ENCODE measurements at regions of chr2 and their contacts with region 1.

Region 1: GRCh38 chr2:38602732-38603401 is at the start of gene HNRNPLL:
- DNase-seq: peak; percentile 98 to 100 (median 99)
- H3K4me3 ChIP-seq: peak within 1 kb of the TSS; percentile 71 to 99 (median 92)
- H3K27ac ChIP-seq: peak within 1 kb of the TSS; percentile 91 to 99 (median 97)
- H3K4me1 ChIP-seq: peaks cover 21 to 40% of the 10 kb centered on the region in 2 donors
- H3K27me3 ChIP-seq: no peaks in the 10 kb centered on the region
- CTCF ChIP-seq: no peak
- POLR2A ChIP-seq: peak; percentile 94 to 99
- total RNA-seq, gene HNRNPLL: 24.5 to 75.2 (median 61.4) TPM

Region 2: DNA sequence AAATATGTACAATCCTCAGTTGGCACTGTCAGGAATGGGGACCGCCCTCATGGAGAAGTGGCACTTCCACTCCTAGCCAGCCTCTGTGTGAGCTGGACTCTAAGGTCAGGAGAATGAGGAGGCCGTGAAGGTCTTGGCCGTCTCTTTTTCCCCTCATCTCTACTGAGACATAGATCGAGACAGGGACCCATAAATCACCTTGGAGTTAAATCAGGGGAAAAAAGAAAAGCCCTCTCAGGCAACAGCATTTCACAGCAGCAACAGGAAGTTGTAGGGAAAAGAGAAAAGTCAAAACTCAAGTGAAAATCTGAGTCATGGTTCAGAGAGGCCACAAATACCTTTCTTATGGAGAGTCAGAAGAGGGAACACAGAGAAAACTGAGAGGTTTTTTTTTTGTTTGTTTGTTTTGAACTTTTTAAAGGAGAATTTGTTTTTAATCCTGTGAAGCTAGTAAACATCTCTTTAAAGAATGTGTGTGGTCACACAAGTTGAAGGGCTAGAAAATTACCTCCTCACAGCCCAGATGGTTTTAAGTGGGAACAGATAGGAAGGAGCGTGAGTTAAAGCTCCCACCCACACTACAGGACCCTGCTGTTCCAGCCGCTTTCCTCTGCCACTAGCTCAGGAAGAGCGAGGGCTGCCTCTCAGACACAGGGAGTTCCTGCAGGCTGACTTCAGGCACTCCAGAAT is 496.3 kb before region 1 on chr2:
- intact Hi-C with region 1: no loop called
- DNase-seq: no peak
- H3K4me3 ChIP-seq: no peak overlapping the region
- H3K27ac ChIP-seq: peak overlapping the region in 4 of 5 donors; percentile 48 to 87 (median 62)
- H3K4me1 ChIP-seq: peaks cover 13 to 16% of the 10 kb centered on the region in 2 donors
- H3K27me3 ChIP-seq: no peaks in the 10 kb centered on the region
- CTCF ChIP-seq: no peak
- POLR2A ChIP-seq: no peak

Region 3: DNA sequence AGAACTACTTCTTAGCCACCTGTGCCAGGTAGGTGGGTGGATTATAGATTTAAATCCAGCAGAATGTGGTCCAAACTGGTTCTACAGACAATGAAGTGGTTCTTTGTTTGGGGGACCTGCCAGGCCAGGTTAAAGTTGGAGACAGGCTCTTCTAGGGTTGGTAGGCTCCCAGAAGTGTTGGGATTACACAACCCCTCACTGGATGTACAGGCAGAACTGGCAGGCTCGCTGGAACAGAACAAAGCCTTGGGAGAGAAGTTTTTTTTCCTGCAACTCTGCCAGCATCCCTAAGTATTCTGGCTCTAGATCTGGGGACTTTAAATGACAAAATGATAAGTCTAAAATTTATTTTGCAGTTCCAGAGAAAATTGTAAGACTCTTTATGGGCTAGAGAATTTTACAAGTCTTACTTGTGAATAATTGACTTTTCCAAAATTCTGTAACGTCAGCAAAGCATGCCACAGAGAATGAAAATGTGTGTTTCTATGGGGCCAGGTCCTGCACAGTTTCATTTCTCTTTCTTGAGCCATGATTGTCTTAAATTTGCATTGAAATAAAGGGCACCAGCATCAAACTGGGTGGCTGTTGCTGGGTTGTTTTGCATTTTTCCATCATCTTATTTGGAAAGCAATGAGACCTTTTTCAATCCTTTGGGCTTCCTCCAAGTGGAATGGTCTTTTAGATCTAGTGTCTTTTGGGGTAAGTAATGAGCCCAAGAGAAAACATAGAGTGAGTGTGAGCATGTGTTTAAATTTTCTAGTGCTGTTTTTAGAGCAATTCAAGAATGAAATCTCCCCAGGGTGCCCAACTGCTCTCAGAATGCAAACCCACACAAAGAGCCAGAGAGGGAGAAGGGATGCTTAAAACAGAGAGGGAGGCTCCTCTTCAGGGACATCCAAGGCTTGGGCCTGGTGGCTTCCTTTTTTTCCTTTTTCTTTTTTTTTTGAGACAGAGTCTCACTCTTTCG is 193.4 kb before region 1 on chr2:
- intact Hi-C with region 1: no loop called
- DNase-seq: peak; percentile 47 to 82 (median 71)
- H3K4me3 ChIP-seq: no peak overlapping the region
- H3K27ac ChIP-seq: peak overlapping the region in 4 of 5 donors; percentile 4 to 67 (median 45)
- H3K4me1 ChIP-seq: peaks cover 22 to 41% of the 10 kb centered on the region in 2 donors
- H3K27me3 ChIP-seq: no peaks in the 10 kb centered on the region
- CTCF ChIP-seq: no peak
- POLR2A ChIP-seq: no peak

Region 4: DNA sequence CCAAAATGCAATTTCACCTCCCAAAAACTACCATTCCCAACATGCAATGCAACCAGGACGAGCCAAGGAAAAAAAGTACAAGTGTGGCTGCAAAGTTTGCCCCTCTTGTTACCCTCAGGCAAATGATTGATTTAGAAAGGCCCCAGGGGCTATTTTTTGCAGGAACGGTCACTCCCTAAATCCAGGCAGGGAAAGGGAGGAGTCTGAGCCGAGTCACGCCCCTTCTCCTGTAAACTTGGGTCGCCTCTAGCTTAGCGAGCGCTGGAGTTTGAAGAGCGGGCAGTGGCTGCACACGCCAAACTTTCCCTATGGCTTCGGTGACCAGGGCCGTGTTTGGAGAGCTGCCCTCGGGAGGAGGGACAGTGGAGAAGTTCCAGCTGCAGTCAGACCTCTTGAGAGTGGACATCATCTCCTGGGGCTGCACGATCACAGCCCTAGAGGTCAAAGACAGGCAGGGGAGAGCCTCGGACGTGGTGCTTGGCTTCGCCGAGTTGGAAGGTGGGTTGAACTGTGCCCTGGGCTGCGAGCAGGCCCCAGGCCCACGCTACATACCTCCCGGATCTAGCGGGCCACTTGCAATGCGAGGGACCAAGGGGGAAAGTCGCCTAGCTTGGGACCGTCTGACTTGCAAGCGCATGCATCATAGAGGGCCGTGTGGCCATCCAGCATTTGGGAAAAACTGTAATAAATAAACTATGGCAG is 63.1 kb after region 1 on chr2 and contains the start of gene GALM:
- intact Hi-C with region 1: loop called (anchors 2 to 10 kb)
- DNase-seq: peak; percentile 88 to 97 (median 94)
- H3K4me3 ChIP-seq: peak within 1 kb of the TSS; percentile 18 to 72 (median 64)
- H3K27ac ChIP-seq: peak within 1 kb of the TSS; percentile 43 to 87 (median 80)
- H3K4me1 ChIP-seq: peaks cover 23 to 24% of the 10 kb centered on the region in 2 donors
- H3K27me3 ChIP-seq: no peaks in the 10 kb centered on the region
- CTCF ChIP-seq: peak in 1 of 6 experiments; percentile 2
- POLR2A ChIP-seq: peak; percentile 70 to 98
- total RNA-seq, gene GALM: 40.0 to 351 (median 176) TPM

Region 5: GRCh38 chr2:38672445-38673391 is 69.9 kb after region 1 on chr2:
- intact Hi-C with region 1: loop called (anchors 2 to 10 kb)
- DNase-seq: peak in 1 of 7 donors; percentile 6
- H3K4me3 ChIP-seq: no peak overlapping the region
- H3K27ac ChIP-seq: peak overlapping the region in 1 of 5 donors; percentile 36
- H3K4me1 ChIP-seq: peaks cover 25 to 50% of the 10 kb centered on the region in 2 donors
- H3K27me3 ChIP-seq: no peaks in the 10 kb centered on the region
- CTCF ChIP-seq: no peak
- POLR2A ChIP-seq: no peak

Region 6: GRCh38 chr2:38748943-38749804 is 146.3 kb after region 1 on chr2:
- intact Hi-C with region 1: loop called in 1 of 2 experiments (anchors 5 kb)
- DNase-seq: no peak
- H3K4me3 ChIP-seq: peak overlapping the region in 3 of 4 donors; percentile 87 to 96 (median 90)
- H3K27ac ChIP-seq: peak overlapping the region in 1 of 5 donors; percentile 100
- H3K4me1 ChIP-seq: peaks cover 19 to 59% of the 10 kb centered on the region in 2 donors
- H3K27me3 ChIP-seq: no peaks in the 10 kb centered on the region
- CTCF ChIP-seq: no peak
- POLR2A ChIP-seq: no peak